ENCODE measurements at regions of chr19 and their contacts with region 1.

Region 1: GRCh38 chr19:38335949-38336637 is 463 bp downstream of the CATSPERG start:
- DNase-seq: peak; percentile 90 to 96
- ATAC-seq: peak; percentile 58 to 80 (median 66)
- H3K4me3 ChIP-seq: peak overlapping the region; percentile 66
- H3K4me3 Mint-ChIP-seq: peak overlapping the region; percentile 99
- H3K27ac ChIP-seq: peak overlapping the region; percentile 86
- H3K27ac Mint-ChIP-seq: peak overlapping the region; percentile 99
- H3K4me1 ChIP-seq: peaks cover 16% of the 10 kb centered on the region
- H3K4me1 Mint-ChIP-seq: peaks cover 18 to 36% of the 10 kb centered on the region in 2 donors
- H3K27me3 ChIP-seq: no peaks in the 10 kb centered on the region
- H3K27me3 Mint-ChIP-seq: no peaks in the 10 kb centered on the region
- CTCF ChIP-seq: no peak

Region 2: GRCh38 chr19:37906869-37907734 is 429.0 kb before region 1 on chr19 and contains the start of gene SIPA1L3:
- intact Hi-C with region 1: loop called (anchors 1 kb)
- DNase-seq: peak; percentile 85 to 95
- ATAC-seq: peak; percentile 98 to 99 (median 98)
- H3K4me3 ChIP-seq: peak within 1 kb of the TSS; percentile 76
- H3K4me3 Mint-ChIP-seq: peak within 1 kb of the TSS; percentile 93
- H3K27ac ChIP-seq: no peak within 1 kb of the TSS
- H3K27ac Mint-ChIP-seq: peak within 1 kb of the TSS; percentile 18 to 87
- H3K4me1 ChIP-seq: peaks cover 22% of the 10 kb centered on the region
- H3K4me1 Mint-ChIP-seq: peaks cover 19 to 25% of the 10 kb centered on the region in 2 donors
- H3K27me3 ChIP-seq: no peaks in the 10 kb centered on the region
- H3K27me3 Mint-ChIP-seq: no peaks in the 10 kb centered on the region
- CTCF ChIP-seq: no peak
- total RNA-seq, gene SIPA1L3: 34.4 to 35.8 (median 35.4) TPM

Region 3: DNA sequence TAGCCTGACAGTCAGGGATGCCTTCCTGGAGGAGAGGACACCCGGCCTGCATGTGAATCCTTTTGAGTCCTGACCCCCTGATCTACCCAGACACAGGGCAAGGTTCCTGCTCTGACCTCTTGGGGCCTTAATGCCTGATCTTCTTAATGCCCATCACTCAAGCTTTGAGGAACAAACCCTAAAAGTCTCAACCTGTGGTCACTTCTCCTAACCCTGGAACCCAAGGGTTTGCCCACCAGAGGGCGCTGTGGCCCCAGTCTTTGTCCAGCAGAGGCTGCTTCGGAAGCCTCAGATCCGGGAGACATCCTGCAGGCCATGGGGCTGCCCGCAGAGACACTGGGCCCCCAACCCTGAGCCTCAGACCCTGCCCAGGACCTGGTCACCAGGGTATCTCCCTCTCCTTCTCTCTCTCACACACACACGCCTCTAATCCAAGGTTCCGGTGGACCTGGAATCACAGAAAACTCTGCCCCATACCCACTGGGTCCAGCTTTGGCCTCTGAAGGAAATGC is 102.3 kb before region 1 on chr19:
- intact Hi-C with region 1: loop called (anchors 2 kb)
- DNase-seq: peak; percentile 73 to 82
- ATAC-seq: peak; percentile 67 to 77 (median 72)
- H3K4me3 ChIP-seq: no peak overlapping the region
- H3K4me3 Mint-ChIP-seq: no peak overlapping the region
- H3K27ac ChIP-seq: no peak overlapping the region
- H3K27ac Mint-ChIP-seq: no peak overlapping the region
- H3K4me1 ChIP-seq: peaks cover 5% of the 10 kb centered on the region
- H3K4me1 Mint-ChIP-seq: peaks cover 0 to 3% of the 10 kb centered on the region in 2 donors
- H3K27me3 ChIP-seq: peaks cover 6% of the 10 kb centered on the region
- H3K27me3 Mint-ChIP-seq: peaks cover 28 to 43% of the 10 kb centered on the region in 2 donors
- CTCF ChIP-seq: peak; percentile 59

Region 4: DNA sequence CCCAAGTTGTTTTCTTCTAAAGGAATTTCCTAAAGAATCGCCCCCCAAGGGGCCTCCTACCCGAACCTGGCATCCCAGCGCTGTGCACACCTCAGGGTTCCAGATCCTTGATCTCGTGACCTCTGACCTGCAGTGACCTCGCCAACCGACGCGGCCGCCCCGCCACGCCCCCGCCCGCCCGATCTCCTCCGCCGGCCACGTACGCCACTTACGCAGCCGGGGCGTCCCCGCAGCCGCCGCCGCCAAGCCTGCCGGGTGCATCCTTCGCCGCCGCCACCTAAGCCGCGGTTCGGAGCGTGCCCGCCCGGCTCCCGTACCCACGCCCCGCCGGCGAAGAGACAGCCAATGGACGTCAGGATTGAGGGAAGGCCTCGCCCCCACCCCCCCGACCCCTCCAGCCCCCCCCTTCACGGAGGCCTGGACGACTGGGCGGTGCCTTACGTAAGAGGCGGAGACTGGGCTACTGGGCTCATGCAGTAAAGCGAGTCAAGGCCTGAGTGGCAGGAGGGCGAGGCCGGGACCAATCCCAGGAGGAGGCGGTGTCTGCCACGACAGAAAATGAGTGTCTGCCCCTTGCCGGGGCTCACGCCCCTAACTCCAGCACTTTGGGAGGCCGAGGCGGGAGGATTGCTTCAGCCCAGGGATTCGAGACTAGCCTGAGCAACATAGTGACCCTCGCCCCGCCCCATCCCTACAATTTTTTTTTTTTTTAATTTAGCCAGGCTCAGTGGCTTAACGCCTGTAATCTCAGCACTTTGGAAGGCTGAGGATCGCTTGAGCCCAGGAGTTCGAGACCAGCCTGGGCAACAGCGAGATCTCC is 20.2 kb before region 1 on chr19 and contains the start of gene YIF1B:
- intact Hi-C with region 1: loop called (anchors 1 kb)
- DNase-seq: peak; percentile 95 to 97
- ATAC-seq: peak; percentile 89 to 96 (median 91)
- H3K4me3 ChIP-seq: peak within 1 kb of the TSS; percentile 82
- H3K4me3 Mint-ChIP-seq: peak within 1 kb of the TSS; percentile 89
- H3K27ac ChIP-seq: peak within 1 kb of the TSS; percentile 94
- H3K27ac Mint-ChIP-seq: peak within 1 kb of the TSS; percentile 76 to 82
- H3K4me1 ChIP-seq: peaks cover 51% of the 10 kb centered on the region
- H3K4me1 Mint-ChIP-seq: peaks cover 15 to 29% of the 10 kb centered on the region in 2 donors
- H3K27me3 ChIP-seq: no peaks in the 10 kb centered on the region
- H3K27me3 Mint-ChIP-seq: peaks cover 0 to 15% of the 10 kb centered on the region in 2 donors
- CTCF ChIP-seq: no peak
- total RNA-seq, gene YIF1B: 23.2 to 28.4 (median 24.1) TPM